ENCODE measurements at regions of chr3 and their contacts with region 1.

Region 1: GRCh38 chr3:130892759-130893375 is 1.0 kb upstream of the ATP2C1 start:
- DNase-seq: peak; percentile 59
- H3K4me3 Mint-ChIP-seq: peak overlapping the region; percentile 92
- H3K27ac Mint-ChIP-seq: peak overlapping the region; percentile 96
- H3K4me1 Mint-ChIP-seq: peaks cover 48% of the 10 kb centered on the region
- H3K27me3 Mint-ChIP-seq: no peaks in the 10 kb centered on the region

Region 2: DNA sequence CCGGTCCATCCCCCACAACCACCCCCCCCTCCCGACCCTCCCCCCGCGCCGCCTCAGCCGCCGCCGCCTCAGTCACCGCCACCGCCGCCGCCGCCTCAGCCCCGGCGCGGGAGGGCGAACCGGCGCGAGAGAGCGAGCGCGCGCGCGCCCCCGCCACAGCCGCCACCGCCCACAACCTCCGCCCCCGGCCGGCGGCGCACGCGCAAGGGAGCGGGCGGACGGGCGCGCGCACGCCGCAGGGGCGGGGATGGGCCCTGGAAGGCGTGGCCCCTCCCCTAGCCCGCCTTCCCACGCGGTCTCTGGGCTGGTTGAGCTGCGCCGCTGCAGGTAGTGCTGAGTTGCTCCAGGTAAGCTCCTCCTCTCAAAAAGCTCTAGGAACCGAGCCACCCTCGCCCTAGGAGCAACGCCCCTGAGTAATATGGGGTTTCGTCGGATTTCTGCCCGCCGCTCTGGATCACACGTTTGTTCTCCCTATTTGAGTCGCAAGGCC is 999.2 kb before region 1 on chr3 and contains the start of gene TMCC1:
- intact Hi-C with region 1: loop called (anchors 5 kb)
- DNase-seq: peak; percentile 83
- H3K4me3 Mint-ChIP-seq: peak within 1 kb of the TSS; percentile 91
- H3K27ac Mint-ChIP-seq: peak within 1 kb of the TSS; percentile 89
- H3K4me1 Mint-ChIP-seq: peaks cover 47% of the 10 kb centered on the region
- H3K27me3 Mint-ChIP-seq: no peaks in the 10 kb centered on the region
- total RNA-seq, gene TMCC1: 17.1 and 22.4 TPM in 2 replicates

Region 3: GRCh38 chr3:130746246-130747039 is 146.4 kb before region 1 on chr3 and contains the start of gene PIK3R4:
- intact Hi-C with region 1: loop called (anchors 1 kb)
- DNase-seq: peak; percentile 94
- H3K4me3 Mint-ChIP-seq: peak within 1 kb of the TSS; percentile 90
- H3K27ac Mint-ChIP-seq: peak within 1 kb of the TSS; percentile 97
- H3K4me1 Mint-ChIP-seq: peaks cover 42% of the 10 kb centered on the region
- H3K27me3 Mint-ChIP-seq: no peaks in the 10 kb centered on the region
- total RNA-seq, gene PIK3R4: 33.1 and 35.4 TPM in 2 replicates

Region 4: DNA sequence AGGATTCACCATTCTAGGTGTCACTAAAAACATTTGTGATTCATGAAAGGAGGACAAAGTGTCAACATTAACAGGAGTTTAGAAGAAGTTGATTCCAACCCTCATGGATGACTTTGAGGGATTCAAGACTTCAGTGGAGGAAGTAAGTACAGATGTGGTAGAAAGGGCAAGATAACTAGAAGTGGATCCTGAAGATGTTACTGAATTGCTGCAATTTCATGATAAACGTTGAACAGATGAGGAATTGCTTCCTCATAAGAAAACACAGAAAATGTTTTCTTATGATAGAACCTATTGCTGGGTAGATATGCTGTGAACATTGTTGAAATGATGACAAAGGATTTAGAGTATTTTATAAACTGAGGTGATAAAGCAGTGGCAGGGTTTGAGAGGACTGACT is 22.4 kb before region 1 on chr3:
- intact Hi-C with region 1: loop called (anchors 1 kb)
- DNase-seq: no peak
- H3K4me3 Mint-ChIP-seq: no peak overlapping the region
- H3K27ac Mint-ChIP-seq: no peak overlapping the region
- H3K4me1 Mint-ChIP-seq: no peaks in the 10 kb centered on the region
- H3K27me3 Mint-ChIP-seq: peaks cover 7% of the 10 kb centered on the region

Region 5: GRCh38 chr3:131026321-131027178 is 133.7 kb after region 1 on chr3 and contains the starts of genes ASTE1 and NEK11:
- intact Hi-C with region 1: loop called (anchors 1 kb)
- DNase-seq: peak; percentile 88
- H3K4me3 Mint-ChIP-seq: peak within 1 kb of the TSS; percentile 91
- H3K27ac Mint-ChIP-seq: peak within 1 kb of the TSS; percentile 94
- H3K4me1 Mint-ChIP-seq: peaks cover 47% of the 10 kb centered on the region
- H3K27me3 Mint-ChIP-seq: no peaks in the 10 kb centered on the region
- total RNA-seq, gene ASTE1: 9.6 and 14.6 TPM in 2 replicates
- total RNA-seq, gene NEK11: 0.51 and 1.2 TPM in 2 replicates

Region 6: GRCh38 chr3:132416807-132417694 is 1524.2 kb after region 1 on chr3 and contains the start of gene DNAJC13:
- intact Hi-C with region 1: loop called (anchors 5 kb)
- DNase-seq: peak; percentile 90
- H3K4me3 Mint-ChIP-seq: peak within 1 kb of the TSS; percentile 100
- H3K27ac Mint-ChIP-seq: peak within 1 kb of the TSS; percentile 98
- H3K4me1 Mint-ChIP-seq: peaks cover 31% of the 10 kb centered on the region
- H3K27me3 Mint-ChIP-seq: no peaks in the 10 kb centered on the region
- total RNA-seq, gene DNAJC13: 30.2 and 34.0 TPM in 2 replicates